GM13976 (cell line): ENCODE measurements at regions of chr14 and their contacts with region 1.

Region 1: DNA sequence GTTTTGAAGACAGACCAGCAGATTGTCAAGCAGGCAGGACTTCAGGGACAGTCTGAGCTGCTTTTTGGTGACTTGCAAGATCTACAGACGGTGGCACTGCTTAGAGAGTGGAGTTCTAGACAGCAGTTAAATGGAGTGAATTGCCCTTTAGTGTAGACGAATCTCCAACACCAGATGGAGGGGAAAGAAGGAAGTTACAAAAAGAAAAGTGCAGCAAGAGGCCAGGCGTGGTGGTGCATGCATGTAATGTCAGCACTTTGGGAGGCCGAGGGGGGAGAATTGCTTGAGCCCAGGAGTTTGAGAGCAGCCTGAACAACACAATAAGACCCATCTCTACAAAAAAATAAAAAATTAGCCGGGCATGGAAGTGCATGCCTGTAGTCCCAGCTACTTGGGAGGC is 8.4 kb upstream of the HHIPL1 start:
- DNase-seq: no peak
- CTCF ChIP-seq: no peak

Region 2: DNA sequence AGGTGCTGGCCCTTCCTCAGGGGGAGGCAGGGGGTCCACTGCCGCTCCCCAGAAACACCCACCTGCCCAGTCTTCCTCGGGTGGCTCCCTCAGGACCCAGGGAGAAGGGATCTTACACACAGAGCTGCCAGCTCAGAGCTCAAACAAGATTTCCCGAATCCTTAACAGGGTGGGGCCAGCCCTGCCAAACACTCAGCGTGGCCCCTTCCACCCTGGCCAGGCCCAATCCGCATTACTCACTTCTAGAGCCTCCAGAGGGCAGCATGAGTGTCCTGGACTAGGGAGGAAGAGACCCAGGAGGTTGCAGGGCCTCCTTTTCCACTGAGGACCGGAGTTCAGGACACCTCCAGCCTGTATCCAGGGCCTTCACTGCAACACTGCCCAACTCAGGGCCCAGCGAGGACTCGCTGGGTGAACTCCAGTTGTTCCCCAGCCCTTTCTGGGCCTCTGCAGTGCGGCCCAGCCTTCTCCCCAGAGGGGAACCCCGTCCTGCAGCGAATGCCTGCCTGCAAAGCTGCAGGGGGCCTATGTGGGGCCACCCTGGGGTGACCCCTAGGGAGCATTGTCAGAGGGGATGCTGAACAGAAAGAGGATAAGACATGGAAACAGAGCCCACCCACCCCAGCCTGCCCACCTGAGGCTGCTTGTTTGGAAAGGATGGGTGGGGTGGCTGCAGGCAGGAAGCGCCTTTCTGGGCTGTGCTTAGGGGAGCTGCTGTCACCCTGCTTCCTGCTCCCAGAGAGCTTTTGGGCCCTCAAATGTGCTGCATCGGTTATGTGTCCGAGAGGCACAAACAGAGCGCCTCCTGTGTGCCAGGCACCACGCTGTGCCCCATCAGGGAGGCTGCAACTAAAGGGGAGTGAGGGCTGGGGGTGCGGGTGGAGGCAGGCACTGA is 111.4 kb before region 1 on chr14:
- in situ Hi-C with region 1: loop called (anchors 10 kb)
- DNase-seq: no peak
- CTCF ChIP-seq: no peak